Activated CD8-positive, alpha-beta T cell treated with anti-CD3 and anti-CD28 coated beads for 36 hours (primary cell): ENCODE measurements at regions of chr6 and their contacts with region 1.

Region 1: DNA sequence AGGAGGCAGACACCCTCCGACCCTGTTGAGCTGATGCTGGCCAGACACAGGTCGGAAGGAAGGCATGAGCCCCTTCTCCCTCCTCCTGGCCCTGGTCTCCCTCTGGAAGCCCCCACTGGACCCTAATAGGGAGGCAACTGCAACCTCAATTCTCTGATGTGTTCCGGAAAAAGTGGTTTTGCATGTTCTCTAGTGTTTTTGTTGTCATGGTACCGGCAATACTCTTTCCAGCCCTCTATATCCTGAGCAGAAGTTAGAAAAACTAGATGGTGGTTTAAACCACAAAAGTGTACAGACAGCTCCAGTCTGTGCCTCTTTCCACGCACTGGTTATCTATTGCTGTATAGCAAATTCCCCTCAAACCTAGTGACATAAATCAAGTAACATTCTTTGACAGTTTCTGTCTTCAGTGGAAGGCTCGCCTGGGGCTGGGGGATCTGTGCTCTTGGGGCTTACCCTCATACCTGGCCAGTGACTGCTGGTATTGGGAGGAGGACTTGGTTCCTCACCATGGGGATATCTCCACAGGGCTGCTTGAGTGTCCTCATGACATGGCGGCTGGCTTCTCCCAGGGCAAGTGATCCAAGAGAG is 37.0 kb downstream of the SYTL3 start:
- DNase-seq: peak; percentile 49
- ATAC-seq: peak; percentile 87
- H3K4me3 Mint-ChIP-seq: no peak overlapping the region
- H3K27ac Mint-ChIP-seq: peak overlapping the region; percentile 26
- H3K4me1 Mint-ChIP-seq: peaks cover 59% of the 10 kb centered on the region
- H3K27me3 Mint-ChIP-seq: no peaks in the 10 kb centered on the region
- CTCF ChIP-seq: no peak

Region 2: DNA sequence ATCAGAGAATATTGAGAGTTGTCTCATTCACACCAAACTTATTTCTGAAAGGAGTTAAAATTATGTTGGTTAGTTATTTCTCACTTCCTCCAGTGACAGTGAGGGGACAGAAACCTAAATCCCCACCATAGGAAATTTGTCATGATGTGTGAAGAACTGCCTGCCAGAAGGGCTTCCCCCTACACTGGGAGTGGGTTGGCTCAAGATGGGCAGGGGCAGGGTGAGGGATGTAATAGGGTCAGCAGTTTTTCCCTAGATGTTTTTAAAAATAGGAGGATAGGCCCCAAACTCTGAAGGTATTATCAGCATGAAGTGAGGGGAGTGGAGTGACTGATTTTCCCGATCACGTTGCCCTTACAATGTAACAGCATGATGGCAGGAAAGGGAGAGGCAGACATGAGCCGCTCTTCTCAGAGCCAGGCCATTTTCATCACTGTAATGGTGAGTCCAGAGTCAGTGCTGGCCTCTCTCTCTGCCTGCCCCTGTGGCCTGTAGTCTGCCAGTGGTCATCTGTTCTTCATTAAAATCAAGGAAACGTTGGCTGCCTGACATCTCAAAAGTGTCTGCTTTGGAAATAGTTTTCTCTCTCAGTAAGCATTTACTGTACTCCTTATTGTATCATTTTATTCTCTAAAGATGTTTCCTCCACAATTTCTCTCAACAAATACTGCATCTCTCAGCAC is 765.1 kb before region 1 on chr6:
- CTCF ChIA-PET with region 1: no interaction called
- POLR2A ChIA-PET with region 1: no interaction called
- intact Hi-C with region 1: no loop called
- DNase-seq: no peak
- ATAC-seq: no peak
- H3K4me3 Mint-ChIP-seq: no peak overlapping the region
- H3K27ac Mint-ChIP-seq: peak overlapping the region; percentile 25
- H3K4me1 Mint-ChIP-seq: peaks cover 7% of the 10 kb centered on the region
- H3K27me3 Mint-ChIP-seq: no peaks in the 10 kb centered on the region
- CTCF ChIP-seq: no peak

Region 3: DNA sequence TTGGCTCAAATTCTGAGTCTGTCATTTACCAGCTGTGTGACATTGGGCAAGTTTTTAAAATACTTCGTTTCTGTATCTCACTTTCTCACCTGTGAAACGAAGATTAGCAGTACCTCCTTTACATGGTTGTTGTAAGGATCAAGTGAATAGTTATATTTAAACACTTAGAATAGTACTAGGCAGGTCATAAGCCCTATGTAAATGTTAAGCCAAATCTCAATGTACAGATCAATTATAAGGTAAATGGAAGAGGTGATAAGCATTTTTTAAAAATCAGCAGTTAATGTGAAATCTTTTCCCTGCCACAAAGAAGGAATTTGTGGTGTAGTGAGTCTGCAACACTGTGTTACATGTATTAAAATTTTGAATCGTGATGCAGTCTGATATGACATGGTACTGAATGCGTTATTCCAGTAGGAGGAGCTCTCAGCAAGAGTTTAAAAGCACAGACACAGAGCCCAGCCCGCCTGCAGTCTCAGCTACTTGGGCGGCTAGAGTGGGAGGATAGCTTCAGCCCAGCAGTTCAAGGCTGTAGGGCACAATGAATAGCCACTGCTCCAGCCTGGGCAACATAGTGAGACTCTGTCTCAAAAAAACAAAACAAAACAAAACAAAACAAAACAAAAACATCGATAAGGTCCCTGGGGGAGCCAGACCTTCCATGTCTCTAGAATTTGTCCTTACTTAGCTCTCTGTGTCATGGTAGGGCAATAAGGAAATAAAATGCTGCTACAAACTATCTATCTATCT is 472.8 kb before region 1 on chr6:
- CTCF ChIA-PET with region 1: interaction called, 9 read pairs
- POLR2A ChIA-PET with region 1: no interaction called
- intact Hi-C with region 1: loop called (anchors 5 kb)
- DNase-seq: peak; percentile 73
- ATAC-seq: peak; percentile 98
- H3K4me3 Mint-ChIP-seq: no peak overlapping the region
- H3K27ac Mint-ChIP-seq: no peak overlapping the region
- H3K4me1 Mint-ChIP-seq: peaks cover 16% of the 10 kb centered on the region
- H3K27me3 Mint-ChIP-seq: peaks cover under 1% of the 10 kb centered on the region
- CTCF ChIP-seq: peak; percentile 81

Region 4: GRCh38 chr6:158644231-158645063 is 42.4 kb before region 1 on chr6 and contains the start of gene DYNLT1:
- CTCF ChIA-PET with region 1: interaction called, 67 read pairs
- POLR2A ChIA-PET with region 1: interaction called, 8 read pairs
- intact Hi-C with region 1: loop called (anchors 5 kb)
- DNase-seq: peak; percentile 91
- ATAC-seq: peak; percentile 59
- H3K4me3 Mint-ChIP-seq: peak within 1 kb of the TSS; percentile 99
- H3K27ac Mint-ChIP-seq: peak within 1 kb of the TSS; percentile 97
- H3K4me1 Mint-ChIP-seq: peaks cover 71% of the 10 kb centered on the region
- H3K27me3 Mint-ChIP-seq: no peaks in the 10 kb centered on the region
- CTCF ChIP-seq: no peak
- total RNA-seq, gene DYNLT1: 94.3 to 98.3 TPM

Region 5: GRCh38 chr6:158660333-158660754 is 26.5 kb before region 1 on chr6:
- CTCF ChIA-PET with region 1: interaction called, 55 read pairs
- POLR2A ChIA-PET with region 1: interaction called, 4 read pairs
- intact Hi-C with region 1: no loop called
- DNase-seq: peak; percentile 58
- ATAC-seq: peak; percentile 69
- H3K4me3 Mint-ChIP-seq: no peak overlapping the region
- H3K27ac Mint-ChIP-seq: peak overlapping the region; percentile 11
- H3K4me1 Mint-ChIP-seq: peaks cover 54% of the 10 kb centered on the region
- H3K27me3 Mint-ChIP-seq: no peaks in the 10 kb centered on the region
- CTCF ChIP-seq: peak; percentile 74

Region 6: GRCh38 chr6:158704181-158704822 is 17.4 kb after region 1 on chr6:
- CTCF ChIA-PET with region 1: interaction called, 19 read pairs
- POLR2A ChIA-PET with region 1: no interaction called
- intact Hi-C with region 1: no loop called
- DNase-seq: peak; percentile 78
- ATAC-seq: peak; percentile 94
- H3K4me3 Mint-ChIP-seq: peak overlapping the region; percentile 47
- H3K27ac Mint-ChIP-seq: peak overlapping the region; percentile 67
- H3K4me1 Mint-ChIP-seq: peaks cover 21% of the 10 kb centered on the region
- H3K27me3 Mint-ChIP-seq: no peaks in the 10 kb centered on the region
- CTCF ChIP-seq: peak; percentile 98

Region 7: DNA sequence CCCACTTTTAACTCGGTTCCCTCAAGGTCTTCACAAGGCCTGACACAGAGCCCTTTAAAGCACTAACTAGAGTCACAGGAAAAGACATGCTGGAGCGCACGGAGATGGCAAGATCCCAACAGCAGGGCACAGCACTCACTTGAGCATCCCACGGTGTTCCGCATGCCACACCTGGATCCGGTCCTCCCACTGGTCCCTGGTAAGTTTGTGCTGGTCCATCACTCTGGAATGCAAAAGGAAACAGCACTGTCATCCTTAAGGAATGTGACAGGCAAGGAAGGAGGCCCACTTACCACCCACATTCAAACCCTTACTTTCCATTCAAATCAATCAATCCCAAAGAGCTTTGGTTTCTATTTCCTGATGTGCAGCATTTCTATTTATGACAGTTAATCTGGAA is 97.6 kb after region 1 on chr6:
- CTCF ChIA-PET with region 1: no interaction called
- POLR2A ChIA-PET with region 1: no interaction called
- intact Hi-C with region 1: no loop called
- DNase-seq: no peak
- ATAC-seq: no peak
- H3K4me3 Mint-ChIP-seq: no peak overlapping the region
- H3K27ac Mint-ChIP-seq: no peak overlapping the region
- H3K4me1 Mint-ChIP-seq: peaks cover 24% of the 10 kb centered on the region
- H3K27me3 Mint-ChIP-seq: no peaks in the 10 kb centered on the region
- CTCF ChIP-seq: no peak

Region 8: GRCh38 chr6:158803733-158804143 is 116.9 kb after region 1 on chr6:
- CTCF ChIA-PET with region 1: no interaction called
- POLR2A ChIA-PET with region 1: no interaction called
- intact Hi-C with region 1: no loop called
- DNase-seq: peak; percentile 69
- ATAC-seq: peak; percentile 73
- H3K4me3 Mint-ChIP-seq: peak overlapping the region; percentile 49
- H3K27ac Mint-ChIP-seq: peak overlapping the region; percentile 85
- H3K4me1 Mint-ChIP-seq: peaks cover 90% of the 10 kb centered on the region
- H3K27me3 Mint-ChIP-seq: no peaks in the 10 kb centered on the region
- CTCF ChIP-seq: no peak

Region 9: DNA sequence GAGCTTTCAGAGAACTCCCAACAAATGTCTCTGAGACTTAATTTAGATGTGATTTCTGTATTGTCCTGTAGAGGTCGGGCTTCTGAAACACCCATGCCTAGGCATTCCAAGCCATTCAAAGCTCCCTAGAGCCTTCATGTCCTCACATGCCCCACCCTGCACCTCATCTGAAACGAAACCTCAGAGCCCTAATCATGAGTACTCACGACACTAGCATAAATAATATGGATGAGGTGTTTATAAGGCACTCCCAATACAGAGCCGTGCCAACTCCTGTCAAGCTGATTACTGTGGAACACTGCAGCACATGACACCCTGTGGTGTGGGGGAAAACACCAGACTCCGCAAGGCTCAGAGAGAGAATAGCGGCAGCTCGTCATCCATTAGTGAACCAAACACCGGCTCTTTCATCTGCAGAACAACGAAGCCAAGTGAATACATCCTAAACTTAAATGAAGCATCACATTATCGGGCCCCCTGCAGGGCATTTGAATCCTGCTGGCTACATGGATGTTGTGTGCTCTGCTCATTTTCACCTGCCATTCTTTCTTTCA is 566.1 kb after region 1 on chr6:
- CTCF ChIA-PET with region 1: no interaction called
- POLR2A ChIA-PET with region 1: no interaction called
- intact Hi-C with region 1: no loop called
- DNase-seq: peak; percentile 3
- ATAC-seq: peak; percentile 72
- H3K4me3 Mint-ChIP-seq: no peak overlapping the region
- H3K27ac Mint-ChIP-seq: no peak overlapping the region
- H3K4me1 Mint-ChIP-seq: peaks cover 1% of the 10 kb centered on the region
- H3K27me3 Mint-ChIP-seq: peaks cover 9% of the 10 kb centered on the region
- CTCF ChIP-seq: peak; percentile 68